ENCODE measurements at regions of chr1 and their contacts with region 1.

Region 1: DNA sequence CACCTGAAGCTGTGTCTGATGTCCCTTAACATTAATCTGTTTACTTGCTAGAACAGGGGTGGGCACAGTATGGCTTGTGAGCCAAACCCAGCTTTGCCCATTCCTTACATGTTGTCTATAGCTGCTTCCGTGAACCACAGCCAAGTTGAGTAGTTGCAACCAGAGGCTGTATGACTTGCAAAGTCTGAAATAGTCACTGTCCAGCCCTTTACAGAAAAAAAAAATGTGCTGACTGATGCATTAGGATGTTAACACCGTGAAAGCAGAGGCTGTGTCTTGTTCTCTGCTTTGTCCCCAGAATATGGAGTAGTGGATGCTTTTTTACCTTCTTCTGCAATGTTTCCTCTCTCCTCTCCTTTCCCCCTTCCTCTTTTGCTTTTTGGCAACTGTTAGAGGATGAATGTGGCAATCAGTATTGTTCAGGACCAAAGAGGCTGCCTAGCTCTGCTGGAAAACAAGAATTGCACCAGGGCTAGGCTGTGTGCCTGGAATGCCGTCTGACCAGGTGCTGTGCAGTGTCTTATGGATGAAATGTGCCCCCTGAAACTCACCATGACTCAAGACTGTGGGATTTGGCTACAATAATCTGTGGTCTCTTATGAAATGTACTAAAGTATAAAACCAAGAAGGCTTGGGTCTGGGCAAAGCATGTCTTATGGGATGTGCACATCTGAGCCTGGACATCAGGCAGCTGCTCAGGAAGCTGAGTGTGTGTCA is 79.6 kb upstream of the GCLM start:
- DNase-seq: no peak
- ATAC-seq: no peak
- H3K4me3 ChIP-seq: no peak overlapping the region
- H3K4me3 Mint-ChIP-seq: no peak overlapping the region
- H3K27ac ChIP-seq: no peak overlapping the region
- H3K27ac Mint-ChIP-seq: no peak overlapping the region
- H3K4me1 ChIP-seq: peaks cover 0 to 3% of the 10 kb centered on the region in 2 experiments
- H3K4me1 Mint-ChIP-seq: no peaks in the 10 kb centered on the region
- H3K27me3 ChIP-seq: peaks cover 0 to 23% of the 10 kb centered on the region in 2 experiments
- H3K27me3 Mint-ChIP-seq: peaks cover 30% of the 10 kb centered on the region in 2 donors

Region 2: DNA sequence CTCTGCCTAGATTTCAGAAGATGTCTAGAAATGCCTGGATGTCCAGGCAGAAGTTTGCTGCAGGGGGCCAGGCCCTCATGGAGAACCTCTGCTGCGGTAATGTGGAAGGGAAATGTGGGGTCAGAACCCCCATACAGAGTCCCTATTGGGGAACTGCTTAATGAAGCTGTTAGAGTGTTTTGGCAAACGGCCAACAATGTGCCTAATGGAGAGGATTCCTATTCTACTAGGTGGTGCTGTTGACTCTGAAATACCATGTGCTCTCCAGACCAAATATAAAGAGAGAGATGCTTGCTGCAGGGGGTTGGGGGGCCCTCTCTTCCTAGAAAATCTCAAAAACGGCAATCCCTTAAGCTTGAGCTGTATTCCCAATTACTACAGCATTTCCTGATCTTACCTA is 700.2 kb before region 1 on chr1:
- CTCF ChIA-PET with region 1: interaction called in 1 of 2 experiments, 11 read pairs
- POLR2A ChIA-PET with region 1: no interaction called
- DNase-seq: no peak
- ATAC-seq: no peak
- H3K4me3 ChIP-seq: no peak overlapping the region
- H3K4me3 Mint-ChIP-seq: no peak overlapping the region
- H3K27ac ChIP-seq: no peak overlapping the region
- H3K27ac Mint-ChIP-seq: no peak overlapping the region
- H3K4me1 ChIP-seq: no peaks in the 10 kb centered on the region
- H3K4me1 Mint-ChIP-seq: peaks cover 0 to 5% (median 2%) of the 10 kb centered on the region in 3 donors
- H3K27me3 ChIP-seq: no peaks in the 10 kb centered on the region
- H3K27me3 Mint-ChIP-seq: no peaks in the 10 kb centered on the region